Endothelial cell of umbilical vein (primary cell): ENCODE measurements at regions of chr14 and their contacts with region 1.

Region 1: GRCh38 chr14:76918751-76919543 is 92.7 kb downstream of the LRRC74A start:
- DNase-seq: peak; percentile 98
- H3K4me3 ChIP-seq: no peak overlapping the region
- H3K27ac ChIP-seq: peak overlapping the region; percentile 86
- H3K4me1 ChIP-seq: peaks cover 32% of the 10 kb centered on the region
- H3K27me3 ChIP-seq: no peaks in the 10 kb centered on the region
- CTCF ChIP-seq: peak in 1 of 2 donors; percentile 24
- POLR2A ChIP-seq: no peak

Region 2: GRCh38 chr14:76947078-76947837 is 28.3 kb after region 1 on chr14:
- CTCF ChIA-PET with region 1: interaction called, 49 read pairs
- POLR2A ChIA-PET with region 1: interaction called, 7 read pairs
- dilution Hi-C with region 1: no loop called
- intact Hi-C with region 1: loop called (anchors 1 kb)
- DNase-seq: peak; percentile 83
- H3K4me3 ChIP-seq: no peak overlapping the region
- H3K27ac ChIP-seq: peak overlapping the region; percentile 72
- H3K4me1 ChIP-seq: peaks cover 40% of the 10 kb centered on the region
- H3K27me3 ChIP-seq: no peaks in the 10 kb centered on the region
- CTCF ChIP-seq: peak; percentile 28 to 54
- POLR2A ChIP-seq: no peak

Region 3: DNA sequence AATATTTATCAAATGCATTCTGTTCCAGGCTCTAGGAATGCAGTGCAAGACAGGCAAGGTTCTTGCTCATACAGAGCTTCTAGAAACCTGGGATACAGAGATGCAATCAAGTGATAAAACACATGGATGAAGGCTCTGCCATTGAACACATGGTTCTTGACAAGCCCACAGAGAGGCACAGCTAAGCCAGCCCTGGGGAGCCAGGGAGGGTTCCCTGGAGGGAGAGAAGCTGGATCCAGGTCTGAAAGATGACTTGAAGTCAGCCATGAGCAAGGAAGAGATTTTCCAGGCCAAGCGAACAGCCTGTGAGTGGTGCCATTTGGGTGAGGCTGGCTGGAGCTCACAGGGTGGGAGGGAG is 43.3 kb after region 1 on chr14:
- CTCF ChIA-PET with region 1: interaction called, 32 read pairs
- POLR2A ChIA-PET with region 1: no interaction called
- dilution Hi-C with region 1: no loop called
- intact Hi-C with region 1: no loop called
- DNase-seq: no peak
- H3K4me3 ChIP-seq: peak overlapping the region in 1 of 3 experiments; percentile 43
- H3K27ac ChIP-seq: peak overlapping the region; percentile 76
- H3K4me1 ChIP-seq: peaks cover 43% of the 10 kb centered on the region
- H3K27me3 ChIP-seq: no peaks in the 10 kb centered on the region
- CTCF ChIP-seq: no peak
- POLR2A ChIP-seq: no peak

Region 4: GRCh38 chr14:77028384-77029231 is 109.7 kb after region 1 on chr14 and contains the start of gene IRF2BPL:
- CTCF ChIA-PET with region 1: interaction called, 51 read pairs
- POLR2A ChIA-PET with region 1: interaction called, 4 read pairs
- dilution Hi-C with region 1: no loop called
- intact Hi-C with region 1: loop called (anchors 1 kb)
- DNase-seq: peak; percentile 99
- H3K4me3 ChIP-seq: peak within 1 kb of the TSS; percentile 24 to 90 (median 54)
- H3K27ac ChIP-seq: peak within 1 kb of the TSS; percentile 93
- H3K4me1 ChIP-seq: peaks cover 48% of the 10 kb centered on the region
- H3K27me3 ChIP-seq: no peaks in the 10 kb centered on the region
- CTCF ChIP-seq: no peak
- POLR2A ChIP-seq: peak; percentile 96
- total RNA-seq, gene IRF2BPL: 23.1 and 23.3 TPM in 2 replicates

Region 5: DNA sequence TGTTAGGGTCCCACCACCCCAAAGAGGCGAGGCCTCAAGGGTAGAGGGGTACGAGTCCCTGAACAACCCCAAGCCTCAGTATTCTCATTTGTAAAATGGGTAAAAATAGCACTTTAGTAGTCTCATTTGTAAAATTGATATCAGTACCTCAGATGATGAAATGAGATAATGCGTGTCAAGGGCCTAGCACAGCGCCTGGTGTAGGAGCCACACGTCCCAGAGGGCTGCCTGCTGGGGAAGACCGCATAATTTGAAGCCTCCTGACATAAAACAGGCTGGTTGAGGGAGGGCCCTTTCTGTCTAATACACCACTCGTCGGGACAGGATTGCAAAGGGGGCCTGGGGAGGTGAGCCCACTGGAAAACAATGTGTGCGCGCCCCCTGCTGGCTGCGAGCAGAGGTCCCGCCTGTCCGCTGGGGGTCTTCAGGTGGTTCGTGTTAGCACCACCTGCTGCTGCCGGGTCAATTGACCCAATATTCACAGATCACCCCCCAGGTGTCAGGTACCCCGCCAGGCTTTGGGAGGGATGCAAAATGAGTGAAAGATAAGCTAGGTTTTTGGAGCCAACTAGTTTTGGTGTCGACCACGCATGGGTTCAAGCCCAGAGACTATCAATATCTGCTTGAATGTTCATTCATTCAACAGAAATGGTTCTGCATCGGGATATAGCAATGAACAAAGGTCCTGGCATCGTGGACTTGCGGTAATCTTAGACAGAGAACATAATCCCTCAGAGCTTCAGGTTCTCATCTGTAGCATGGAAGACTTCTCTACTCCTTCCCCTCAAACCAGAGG is 134.3 kb after region 1 on chr14:
- CTCF ChIA-PET with region 1: interaction called, 67 read pairs
- POLR2A ChIA-PET with region 1: no interaction called
- dilution Hi-C with region 1: no loop called
- intact Hi-C with region 1: loop called (anchors 1 kb)
- DNase-seq: peak; percentile 81
- H3K4me3 ChIP-seq: no peak overlapping the region
- H3K27ac ChIP-seq: peak overlapping the region; percentile 6
- H3K4me1 ChIP-seq: peaks cover 11% of the 10 kb centered on the region
- H3K27me3 ChIP-seq: no peaks in the 10 kb centered on the region
- CTCF ChIP-seq: peak; percentile 95 to 96
- POLR2A ChIP-seq: no peak

Region 6: GRCh38 chr14:77067632-77068514 is 148.9 kb after region 1 on chr14:
- CTCF ChIA-PET with region 1: interaction called, 209 read pairs
- POLR2A ChIA-PET with region 1: no interaction called
- dilution Hi-C with region 1: no loop called
- intact Hi-C with region 1: no loop called
- DNase-seq: peak; percentile 61
- H3K4me3 ChIP-seq: no peak overlapping the region
- H3K27ac ChIP-seq: no peak overlapping the region
- H3K4me1 ChIP-seq: no peaks in the 10 kb centered on the region
- H3K27me3 ChIP-seq: peaks cover 0 to 2% of the 10 kb centered on the region in 2 experiments
- CTCF ChIP-seq: peak; percentile 90 to 91
- POLR2A ChIP-seq: no peak